AG04449 (cell line): ENCODE measurements at regions of chr11 and their contacts with region 1.

Region 1: GRCh38 chr11:11022125-11022730 is 164.4 kb upstream of the ZBED5 start:
- DNase-seq: no peak
- H3K4me3 ChIP-seq: no peak overlapping the region
- CTCF ChIP-seq: no peak

Region 2: GRCh38 chr11:10122326-10123197 is 899.7 kb before region 1 on chr11:
- CTCF ChIA-PET with region 1: no interaction called
- POLR2A ChIA-PET with region 1: no interaction called
- DNase-seq: no peak
- H3K4me3 ChIP-seq: no peak overlapping the region
- CTCF ChIP-seq: no peak

Region 3: GRCh38 chr11:10693509-10694081 is 328.6 kb before region 1 on chr11 and contains the start of gene IRAG1:
- CTCF ChIA-PET with region 1: no interaction called
- POLR2A ChIA-PET with region 1: no interaction called
- DNase-seq: peak; percentile 38
- H3K4me3 ChIP-seq: peak within 1 kb of the TSS; percentile 66
- CTCF ChIP-seq: no peak

Region 4: DNA sequence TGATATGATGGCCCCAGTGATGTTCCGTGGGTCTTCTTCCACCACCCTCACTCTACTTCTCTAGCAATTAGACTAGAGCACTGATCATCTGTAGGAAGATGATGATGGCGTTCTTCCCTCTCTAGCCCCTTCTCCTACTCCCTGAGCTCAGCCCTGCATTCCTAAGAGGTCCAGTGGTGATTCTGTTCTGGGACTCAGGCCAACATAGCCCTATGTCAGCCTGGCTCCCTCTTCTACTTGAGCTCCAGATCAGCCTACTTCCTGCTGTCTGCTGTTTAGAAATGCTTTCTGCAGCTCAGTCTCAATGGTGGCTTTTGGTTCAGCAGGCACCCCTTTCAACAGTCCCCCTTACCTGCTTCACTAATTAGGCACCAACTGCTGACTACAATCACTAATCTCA is 78.3 kb before region 1 on chr11:
- CTCF ChIA-PET with region 1: interaction called, 21 read pairs
- POLR2A ChIA-PET with region 1: no interaction called
- DNase-seq: no peak
- H3K4me3 ChIP-seq: no peak overlapping the region
- CTCF ChIP-seq: no peak

Region 5: DNA sequence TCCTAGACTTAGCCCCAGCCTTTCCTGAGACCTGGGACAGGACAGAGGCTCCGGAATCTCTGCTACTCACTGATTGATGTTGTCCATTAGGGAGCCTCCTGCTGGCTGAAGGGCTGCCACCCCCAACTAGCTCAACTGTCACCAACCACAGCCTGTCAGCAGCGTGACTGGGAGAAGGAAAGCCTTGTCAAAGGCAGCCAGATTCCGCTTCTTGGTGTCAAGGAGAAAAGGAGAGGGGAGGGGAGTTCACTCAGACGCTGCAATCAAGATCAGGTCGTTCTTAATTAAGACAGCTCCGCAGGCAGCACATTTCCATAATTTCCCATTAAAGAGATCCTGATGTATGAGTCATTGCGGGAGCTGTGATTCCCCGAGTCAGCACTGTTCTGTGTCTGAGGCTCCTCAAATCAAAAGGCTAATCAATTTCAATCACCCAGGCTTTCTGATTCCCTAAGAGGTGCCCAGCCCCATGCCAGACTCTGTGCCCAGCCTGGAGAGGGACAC is 11.6 kb before region 1 on chr11:
- CTCF ChIA-PET with region 1: interaction called, 24 read pairs
- POLR2A ChIA-PET with region 1: no interaction called
- DNase-seq: no peak
- H3K4me3 ChIP-seq: no peak overlapping the region
- CTCF ChIP-seq: peak; percentile 42